ENCODE measurements at regions of chr1 and their contacts with region 1.

Region 1: GRCh38 chr1:23657659-23658275 is 33.8 kb upstream of the RPL11 start:
- DNase-seq: peak; percentile 60 to 63
- ATAC-seq: peak; percentile 87 to 97
- H3K4me3 ChIP-seq: no peak overlapping the region
- H3K27ac ChIP-seq: no peak overlapping the region
- H3K4me1 ChIP-seq: no peaks in the 10 kb centered on the region
- CTCF ChIP-seq: peak; percentile 56
- EP300 ChIP-seq: no peak
- POLR2A ChIP-seq: no peak
- RAD21 ChIP-seq: peak in 1 of 2 experiments; percentile 43; a peak in 2 of 5 replicates

Region 2: DNA sequence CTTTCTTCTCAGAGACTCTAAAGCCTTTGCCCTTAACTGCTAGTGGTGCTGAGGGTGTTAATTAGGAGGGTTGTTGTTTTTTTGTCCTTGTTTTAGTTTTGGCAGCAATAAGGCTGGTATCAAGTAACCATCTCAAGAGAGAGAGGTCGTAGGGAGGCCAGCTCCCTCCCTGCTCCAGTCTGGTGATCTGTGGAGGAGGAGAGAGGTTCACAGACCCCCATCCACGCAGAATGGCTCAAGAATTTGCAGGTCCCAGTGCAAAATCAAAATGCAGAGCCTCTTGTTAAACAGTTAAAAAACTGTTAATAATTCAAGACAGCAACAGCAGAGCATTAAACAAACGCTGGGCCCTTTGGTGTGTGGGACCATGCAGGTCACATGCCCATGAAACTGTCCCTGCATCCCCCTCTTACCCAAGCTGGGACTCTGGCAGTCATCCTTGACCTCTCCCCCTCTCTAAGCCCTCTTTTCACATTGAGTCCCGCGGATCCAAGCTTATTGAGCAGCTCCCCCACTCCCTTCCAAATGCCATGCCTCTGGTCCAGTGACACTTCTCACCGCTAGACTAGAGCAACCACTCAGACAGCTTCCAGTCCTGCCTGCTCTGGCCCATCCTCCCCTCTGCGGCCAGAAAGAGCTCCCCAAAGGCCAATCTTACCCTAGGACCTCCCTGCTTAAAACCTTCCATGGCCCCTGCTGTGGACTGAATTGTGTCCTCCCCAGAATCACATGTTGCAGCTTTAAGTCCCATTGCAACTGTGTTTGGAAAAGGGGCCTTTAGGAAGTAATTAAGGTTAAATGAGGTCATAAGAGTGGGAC is 13.8 kb before region 1 on chr1:
- CTCF ChIA-PET with region 1: interaction called, 13 read pairs
- POLR2A ChIA-PET with region 1: no interaction called
- DNase-seq: no peak
- ATAC-seq: no peak
- H3K4me3 ChIP-seq: no peak overlapping the region
- H3K27ac ChIP-seq: no peak overlapping the region
- H3K4me1 ChIP-seq: no peaks in the 10 kb centered on the region
- CTCF ChIP-seq: no peak
- EP300 ChIP-seq: no peak
- POLR2A ChIP-seq: no peak
- RAD21 ChIP-seq: no peak

Region 3: GRCh38 chr1:23673086-23673813 is 15.5 kb after region 1 on chr1:
- CTCF ChIA-PET with region 1: interaction called, 13 read pairs
- POLR2A ChIA-PET with region 1: no interaction called
- DNase-seq: peak; percentile 67 to 79
- ATAC-seq: peak; percentile 85 to 86
- H3K4me3 ChIP-seq: no peak overlapping the region
- H3K27ac ChIP-seq: no peak overlapping the region
- H3K4me1 ChIP-seq: peaks cover 15% of the 10 kb centered on the region
- CTCF ChIP-seq: no peak
- EP300 ChIP-seq: no peak
- POLR2A ChIP-seq: no peak
- RAD21 ChIP-seq: no peak

Region 4: DNA sequence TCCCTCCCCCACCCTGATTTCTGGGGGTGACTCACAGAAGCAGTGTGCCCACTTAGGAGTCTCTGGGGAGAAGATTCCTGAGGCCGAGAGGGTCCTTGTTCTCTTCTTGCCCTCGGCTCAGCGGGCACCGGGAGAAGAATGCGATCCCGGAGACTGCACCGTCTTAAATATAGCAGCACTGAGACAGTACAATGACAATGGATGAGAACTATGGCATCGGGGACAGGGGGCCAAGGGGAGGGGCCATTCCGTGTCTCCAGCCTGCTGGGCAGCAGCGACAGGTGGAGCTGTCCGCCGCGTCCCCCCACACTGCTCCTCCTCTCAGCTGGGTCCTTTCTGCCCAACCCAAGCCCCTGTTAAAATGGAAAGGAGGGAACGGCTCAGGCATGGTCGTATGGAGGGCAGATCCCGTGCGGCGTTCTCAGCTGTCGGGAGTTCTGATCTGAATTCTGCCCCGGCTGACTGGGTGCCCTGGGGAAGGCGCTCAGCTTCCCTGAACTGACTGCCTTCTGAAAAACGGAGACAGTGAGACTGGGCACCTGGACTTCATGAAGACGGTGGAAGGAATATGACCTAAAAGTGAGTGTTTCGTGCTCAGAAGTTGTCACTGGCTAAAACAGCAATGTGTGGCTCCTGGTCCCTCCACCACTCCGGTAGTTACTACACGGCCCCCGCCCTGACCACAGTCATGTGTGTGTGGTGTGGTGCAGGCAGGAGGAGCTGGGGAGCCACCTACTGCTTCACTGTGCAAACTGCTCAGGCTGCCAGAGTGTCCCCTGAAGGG is 454.4 kb after region 1 on chr1 and contains the start of gene MYOM3:
- CTCF ChIA-PET with region 1: no interaction called
- POLR2A ChIA-PET with region 1: no interaction called
- DNase-seq: peak; percentile 25 to 59
- ATAC-seq: peak; percentile 44 to 75; a peak in 3 of 6 replicates
- H3K4me3 ChIP-seq: no peak within 1 kb of the TSS
- H3K27ac ChIP-seq: peak within 1 kb of the TSS in 1 of 2 experiments; percentile 56; a peak in 3 of 6 replicates
- H3K4me1 ChIP-seq: peaks cover 32% of the 10 kb centered on the region
- CTCF ChIP-seq: peak; percentile 33; the same call in 1 of the 3 replicates
- EP300 ChIP-seq: no peak
- POLR2A ChIP-seq: no peak
- RAD21 ChIP-seq: peak; percentile 44 to 65; a peak in 4 of 5 replicates
- polyA plus RNA-seq, gene MYOM3: 2.6 and 2.7 TPM in 2 replicates

Measured in A549 (cell line).